ENCODE measurements at regions of chr9 and their contacts with region 1.

Region 1: DNA sequence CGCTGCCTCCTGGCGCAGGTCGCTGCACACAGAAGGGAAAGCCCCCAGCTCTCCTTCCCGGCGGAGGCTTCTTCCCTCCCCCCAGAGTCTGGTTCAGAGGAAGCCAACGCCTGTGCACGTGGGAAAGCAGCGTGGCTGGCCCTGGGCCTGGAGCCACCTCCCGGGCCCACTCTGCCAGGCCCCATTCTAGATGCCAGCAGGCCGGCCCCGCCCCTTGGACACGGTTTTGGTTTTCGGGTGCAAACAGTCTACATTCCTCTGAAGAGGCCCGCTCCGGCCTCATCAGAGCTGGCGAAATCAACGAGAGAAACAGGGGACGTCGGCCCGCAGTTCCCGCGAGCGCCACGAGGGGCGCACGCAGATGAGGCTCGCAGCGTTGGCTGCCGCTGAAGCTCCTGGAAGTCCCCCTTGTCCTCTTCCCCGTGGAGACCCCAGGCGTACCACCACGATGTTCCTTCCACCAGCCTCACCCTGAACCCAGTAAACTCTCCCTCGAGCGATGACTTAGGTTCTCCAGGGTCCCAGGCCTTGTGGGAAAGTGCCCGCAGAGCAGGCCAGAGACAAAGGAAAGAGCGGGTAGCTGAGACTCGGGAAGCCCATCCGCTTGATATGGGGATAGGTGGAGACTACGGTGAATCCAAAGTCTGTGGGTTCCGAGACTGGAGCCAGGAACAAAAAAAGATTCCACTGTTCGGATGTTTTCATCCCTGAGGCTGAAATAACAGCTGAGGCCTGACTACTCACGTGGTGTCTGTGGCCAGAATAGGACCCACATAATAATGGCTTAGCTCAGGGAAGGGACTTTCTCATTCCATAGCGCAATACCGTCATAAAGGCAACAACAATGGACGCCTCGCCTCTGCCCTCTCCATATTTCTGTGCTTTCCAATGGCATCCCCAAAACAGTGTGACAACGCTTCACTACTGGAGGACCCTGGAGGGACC is 64.2 kb downstream of the KLF4 start:
- DNase-seq: no peak
- H3K4me3 ChIP-seq: peak overlapping the region; percentile 36
- H3K27ac ChIP-seq: no peak overlapping the region
- H3K27me3 ChIP-seq: peaks cover 2% of the 10 kb centered on the region
- CTCF ChIP-seq: peak; percentile 86

Region 2: GRCh38 chr9:107443786-107444185 is 18.4 kb after region 1 on chr9:
- CTCF ChIA-PET with region 1: interaction called, 14 read pairs
- POLR2A ChIA-PET with region 1: no interaction called
- DNase-seq: no peak
- H3K4me3 ChIP-seq: no peak overlapping the region
- H3K27ac ChIP-seq: no peak overlapping the region
- H3K27me3 ChIP-seq: no peaks in the 10 kb centered on the region
- CTCF ChIP-seq: no peak

Region 3: GRCh38 chr9:107455425-107456135 is 30.2 kb after region 1 on chr9:
- CTCF ChIA-PET with region 1: interaction called, 10 read pairs
- POLR2A ChIA-PET with region 1: no interaction called
- DNase-seq: no peak
- H3K4me3 ChIP-seq: no peak overlapping the region
- H3K27ac ChIP-seq: no peak overlapping the region
- H3K27me3 ChIP-seq: peaks cover 6% of the 10 kb centered on the region
- CTCF ChIP-seq: no peak

Region 4: DNA sequence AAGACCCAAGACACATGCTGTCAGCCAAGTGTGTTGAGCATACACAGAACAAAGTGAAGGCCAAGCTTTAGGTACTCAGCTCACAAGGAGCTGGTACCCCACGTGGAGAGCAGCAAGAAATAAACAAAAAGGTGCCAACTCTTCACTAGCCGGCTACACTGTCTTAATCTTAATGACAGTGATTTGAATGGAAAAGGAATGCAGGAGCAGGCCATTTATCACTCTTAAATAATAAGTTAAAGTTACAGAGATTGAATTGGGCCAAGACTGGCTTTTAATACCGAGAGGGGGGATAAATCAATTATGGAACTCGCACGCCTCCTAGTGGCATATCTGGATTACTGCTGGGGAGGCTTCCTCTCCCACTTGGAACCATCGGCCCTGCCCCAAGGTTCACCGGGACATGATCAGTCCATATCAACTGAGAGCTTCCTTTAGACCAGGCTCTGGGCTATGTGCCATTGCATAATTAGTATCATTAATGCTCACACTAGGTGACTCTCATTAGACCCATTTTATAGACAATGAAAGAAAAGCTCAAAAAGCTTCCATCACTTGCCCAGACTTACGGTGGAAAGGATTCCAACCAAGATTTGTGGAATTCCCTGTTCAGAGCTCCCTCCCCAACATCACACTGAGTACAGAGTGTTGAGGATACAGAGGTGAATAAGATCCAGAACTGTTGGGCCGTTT is 1336.4 kb after region 1 on chr9:
- CTCF ChIA-PET with region 1: interaction called, 60 read pairs
- POLR2A ChIA-PET with region 1: no interaction called
- DNase-seq: peak; percentile 13
- H3K4me3 ChIP-seq: no peak overlapping the region
- H3K27ac ChIP-seq: no peak overlapping the region
- H3K27me3 ChIP-seq: peaks cover 4% of the 10 kb centered on the region
- CTCF ChIP-seq: peak; percentile 88